ENCODE measurements at regions of chr15 and their contacts with region 1.

Region 1: DNA sequence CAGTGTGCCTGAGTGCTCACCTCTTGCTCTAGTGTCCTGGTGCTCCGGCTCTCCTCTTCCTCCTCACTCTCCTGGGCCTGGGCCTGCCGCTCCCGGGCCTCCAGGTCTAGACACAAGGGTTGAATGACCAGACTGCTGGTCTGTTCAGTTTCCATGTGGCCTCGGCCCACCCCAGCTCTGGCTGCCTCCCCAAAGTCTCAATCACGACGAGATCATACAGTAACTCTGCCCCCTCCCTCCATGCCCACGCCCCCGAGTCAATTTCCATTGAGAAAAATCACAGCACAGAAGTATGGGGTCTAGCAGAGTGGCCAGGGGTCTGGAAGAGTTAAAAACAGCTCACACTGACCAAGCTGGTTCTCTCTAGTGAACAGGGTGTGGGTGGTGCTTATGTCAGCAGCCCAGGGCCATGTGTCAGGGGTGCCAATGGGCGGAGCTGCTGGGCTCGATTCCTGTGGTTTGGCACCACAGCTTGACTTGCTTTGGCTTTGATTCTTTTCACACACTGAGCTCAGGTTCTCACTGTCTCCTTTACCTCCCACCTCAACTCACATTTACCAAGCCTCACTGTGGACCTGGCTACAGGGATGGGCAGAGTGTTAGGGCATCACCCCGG is 6.8 kb downstream of the C15orf62 start:
- DNase-seq: peak; percentile 74 to 79
- ATAC-seq: peak; percentile 97 to 99 (median 98)
- H3K4me3 ChIP-seq: no peak overlapping the region
- H3K4me3 Mint-ChIP-seq: peak overlapping the region; percentile 82
- H3K27ac ChIP-seq: peak overlapping the region; percentile 62
- H3K27ac Mint-ChIP-seq: peak overlapping the region; percentile 86 to 97
- H3K4me1 ChIP-seq: peaks cover 42% of the 10 kb centered on the region
- H3K4me1 Mint-ChIP-seq: peaks cover 23 to 33% of the 10 kb centered on the region in 2 donors
- H3K27me3 ChIP-seq: no peaks in the 10 kb centered on the region
- H3K27me3 Mint-ChIP-seq: no peaks in the 10 kb centered on the region
- CTCF ChIP-seq: no peak

Region 2: GRCh38 chr15:40593588-40594428 is 182.8 kb before region 1 on chr15 and contains the start of gene KNL1:
- intact Hi-C with region 1: loop called (anchors 5 kb)
- DNase-seq: peak; percentile 87 to 95
- ATAC-seq: peak; percentile 82 to 89 (median 84)
- H3K4me3 ChIP-seq: peak within 1 kb of the TSS; percentile 89
- H3K4me3 Mint-ChIP-seq: peak within 1 kb of the TSS; percentile 99
- H3K27ac ChIP-seq: peak within 1 kb of the TSS; percentile 95
- H3K27ac Mint-ChIP-seq: peak within 1 kb of the TSS; percentile 99 to 100
- H3K4me1 ChIP-seq: peaks cover 9% of the 10 kb centered on the region
- H3K4me1 Mint-ChIP-seq: peaks cover 28 to 30% of the 10 kb centered on the region in 2 donors
- H3K27me3 ChIP-seq: no peaks in the 10 kb centered on the region
- H3K27me3 Mint-ChIP-seq: peaks cover 0 to 3% of the 10 kb centered on the region in 2 donors
- CTCF ChIP-seq: no peak
- total RNA-seq, gene KNL1: 2.4 to 4.1 (median 3.6) TPM

Region 3: GRCh38 chr15:40763801-40764732 is 12.6 kb before region 1 on chr15 and contains the start of gene GCHFR:
- intact Hi-C with region 1: loop called (anchors 1 kb)
- DNase-seq: peak; percentile 54 to 81
- ATAC-seq: peak; percentile 53 to 58 (median 58)
- H3K4me3 ChIP-seq: peak within 1 kb of the TSS; percentile 74
- H3K4me3 Mint-ChIP-seq: peak within 1 kb of the TSS; percentile 85
- H3K27ac ChIP-seq: peak within 1 kb of the TSS; percentile 71
- H3K27ac Mint-ChIP-seq: peak within 1 kb of the TSS; percentile 87 to 91
- H3K4me1 ChIP-seq: peaks cover 53% of the 10 kb centered on the region
- H3K4me1 Mint-ChIP-seq: peaks cover 28 to 50% of the 10 kb centered on the region in 2 donors
- H3K27me3 ChIP-seq: no peaks in the 10 kb centered on the region
- H3K27me3 Mint-ChIP-seq: no peaks in the 10 kb centered on the region
- CTCF ChIP-seq: peak; percentile 11
- total RNA-seq, gene GCHFR: 17.5 to 25.9 (median 25.9) TPM

Measured in natural killer cell (primary cell).